ENCODE measurements at regions of chr12 and their contacts with region 1.

Region 1: DNA sequence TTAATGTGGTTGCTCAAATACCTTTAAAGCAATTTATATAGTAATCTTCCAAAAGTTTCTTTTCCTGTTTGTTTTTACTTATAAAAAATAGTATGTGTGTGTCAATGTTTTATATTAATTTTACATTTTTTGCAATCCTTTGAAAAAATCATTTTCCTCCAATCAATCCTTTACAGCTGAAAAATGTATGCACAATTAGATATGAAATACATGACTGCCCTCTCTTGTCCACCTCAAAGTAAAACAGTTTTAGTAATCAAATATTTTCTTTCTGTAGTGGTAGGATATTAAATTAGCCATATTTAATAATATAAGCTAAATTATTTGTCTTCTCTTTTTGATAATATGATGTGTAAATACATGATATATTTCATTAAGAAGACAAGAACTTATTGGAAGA is 269.9 kb downstream of the ADAMTS20 start:
- DNase-seq: no peak
- ATAC-seq: no peak
- H3K4me3 ChIP-seq: no peak overlapping the region
- H3K27ac ChIP-seq: no peak overlapping the region
- H3K4me1 ChIP-seq: peaks cover 3% of the 10 kb centered on the region; the same call in 1 of the 2 replicates
- H3K27me3 ChIP-seq: no peaks in the 10 kb centered on the region
- CTCF ChIP-seq: peak in 2 of 3 experiments; percentile 8 to 16; a peak in 2 of 6 replicates
- EP300 ChIP-seq: no peak
- POLR2A ChIP-seq: no peak
- RAD21 ChIP-seq: peak; percentile 66

Region 2: DNA sequence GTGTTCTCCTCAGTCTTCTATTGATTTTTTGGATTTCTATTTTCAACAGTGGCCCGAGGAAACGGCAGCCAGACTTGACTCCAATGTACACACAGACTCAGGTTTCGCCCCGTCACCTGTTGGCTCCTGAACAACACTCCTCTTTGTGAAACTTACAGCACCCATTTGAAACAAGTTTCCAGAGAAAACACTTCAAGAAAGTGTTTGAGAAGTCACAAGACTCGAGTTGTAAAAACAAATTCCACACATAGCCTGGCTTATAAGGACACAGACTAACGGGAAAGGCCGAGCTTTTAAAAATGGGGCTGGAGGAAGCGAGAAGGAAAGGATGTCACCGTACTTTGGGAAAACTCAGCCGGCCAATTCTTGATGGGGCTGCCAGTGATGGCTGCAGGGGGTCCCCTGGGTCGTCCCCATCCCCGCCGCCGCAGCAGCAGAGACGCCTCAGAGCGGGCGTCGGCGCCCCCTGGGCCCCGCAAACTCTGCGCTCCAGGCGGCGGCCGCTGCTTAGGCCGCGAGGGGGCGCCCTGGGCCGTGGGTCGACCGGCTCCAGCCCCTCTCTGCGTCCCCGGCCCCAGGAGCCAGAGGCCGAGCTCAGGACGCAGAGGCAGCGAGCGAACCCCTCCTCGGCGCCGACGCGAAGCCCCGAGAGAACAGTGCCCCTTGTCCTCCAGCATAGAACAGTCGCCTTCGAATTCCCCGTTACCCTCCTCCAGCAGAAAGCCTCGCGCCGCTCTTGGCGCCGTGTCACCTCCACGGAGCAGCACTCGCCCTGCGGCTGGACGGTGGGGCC is 799.5 kb before region 1 on chr12:
- CTCF ChIA-PET with region 1: interaction called, 71 read pairs
- POLR2A ChIA-PET with region 1: no interaction called
- RAD21 ChIA-PET with region 1: interaction called, 38 read pairs
- SMC1A ChIA-PET with region 1: interaction called, 49 read pairs
- in situ Hi-C with region 1: loop called (anchors 10 kb)
- intact Hi-C with region 1: loop called (anchors 2 kb)
- DNase-seq: no peak
- ATAC-seq: peak; percentile 95
- H3K4me3 ChIP-seq: peak overlapping the region; percentile 73
- H3K27ac ChIP-seq: no peak overlapping the region
- H3K4me1 ChIP-seq: peaks cover 9% of the 10 kb centered on the region
- H3K27me3 ChIP-seq: peaks cover 0 to 6% of the 10 kb centered on the region in 2 experiments; a peak in 1 of 4 replicates
- CTCF ChIP-seq: peak; percentile 79 to 96 (median 82)
- EP300 ChIP-seq: no peak
- POLR2A ChIP-seq: no peak
- RAD21 ChIP-seq: peak; percentile 85

Region 3: GRCh38 chr12:42589465-42590329 is 692.4 kb before region 1 on chr12 and contains the start of gene PRICKLE1:
- CTCF ChIA-PET with region 1: no interaction called
- POLR2A ChIA-PET with region 1: no interaction called
- RAD21 ChIA-PET with region 1: interaction called, 3 read pairs
- SMC1A ChIA-PET with region 1: interaction called, 3 read pairs
- in situ Hi-C with region 1: loop called (anchors 10 kb)
- intact Hi-C with region 1: no loop called
- DNase-seq: no peak
- ATAC-seq: peak; percentile 87
- H3K4me3 ChIP-seq: peak within 1 kb of the TSS; percentile 64; the same call in 1 of the 2 replicates
- H3K27ac ChIP-seq: no peak within 1 kb of the TSS
- H3K4me1 ChIP-seq: peaks cover 8% of the 10 kb centered on the region
- H3K27me3 ChIP-seq: peaks cover 8 to 26% of the 10 kb centered on the region in 2 experiments
- CTCF ChIP-seq: no peak
- EP300 ChIP-seq: no peak
- POLR2A ChIP-seq: no peak
- RAD21 ChIP-seq: no peak
- polyA plus RNA-seq, gene PRICKLE1: 0.86 to 1.2 TPM

Region 4: GRCh38 chr12:43210485-43211192 is 71.5 kb before region 1 on chr12:
- CTCF ChIA-PET with region 1: interaction called, 5 read pairs
- POLR2A ChIA-PET with region 1: no interaction called
- RAD21 ChIA-PET with region 1: interaction called, 10 read pairs
- SMC1A ChIA-PET with region 1: interaction called, 19 read pairs
- in situ Hi-C with region 1: no loop called
- intact Hi-C with region 1: loop called (anchors 2 kb)
- DNase-seq: peak; percentile 57
- ATAC-seq: peak; percentile 99
- H3K4me3 ChIP-seq: no peak overlapping the region
- H3K27ac ChIP-seq: no peak overlapping the region
- H3K4me1 ChIP-seq: peaks cover 9% of the 10 kb centered on the region; the same call in 1 of the 2 replicates
- H3K27me3 ChIP-seq: no peaks in the 10 kb centered on the region
- CTCF ChIP-seq: no peak
- EP300 ChIP-seq: peak; percentile 69 to 74; a peak in 2 of 4 replicates
- POLR2A ChIP-seq: no peak
- RAD21 ChIP-seq: no peak

Region 5: GRCh38 chr12:43267818-43268217 is 14.3 kb before region 1 on chr12:
- CTCF ChIA-PET with region 1: interaction called, 16 read pairs
- POLR2A ChIA-PET with region 1: no interaction called
- RAD21 ChIA-PET with region 1: interaction called, 8 read pairs
- SMC1A ChIA-PET with region 1: interaction called, 20 read pairs
- in situ Hi-C with region 1: no loop called
- intact Hi-C with region 1: no loop called
- DNase-seq: no peak
- ATAC-seq: no peak
- H3K4me3 ChIP-seq: no peak overlapping the region
- H3K27ac ChIP-seq: no peak overlapping the region
- H3K4me1 ChIP-seq: no peaks in the 10 kb centered on the region
- H3K27me3 ChIP-seq: no peaks in the 10 kb centered on the region
- CTCF ChIP-seq: no peak
- EP300 ChIP-seq: no peak
- POLR2A ChIP-seq: no peak
- RAD21 ChIP-seq: no peak

Region 6: GRCh38 chr12:43982544-43982943 is 700.4 kb after region 1 on chr12:
- CTCF ChIA-PET with region 1: no interaction called
- POLR2A ChIA-PET with region 1: no interaction called
- RAD21 ChIA-PET with region 1: no interaction called
- SMC1A ChIA-PET with region 1: no interaction called
- in situ Hi-C with region 1: no loop called
- intact Hi-C with region 1: no loop called
- DNase-seq: no peak
- ATAC-seq: no peak
- H3K4me3 ChIP-seq: no peak overlapping the region
- H3K27ac ChIP-seq: no peak overlapping the region
- H3K4me1 ChIP-seq: no peaks in the 10 kb centered on the region
- H3K27me3 ChIP-seq: no peaks in the 10 kb centered on the region
- CTCF ChIP-seq: no peak
- EP300 ChIP-seq: no peak
- POLR2A ChIP-seq: no peak
- RAD21 ChIP-seq: no peak